ENCODE measurements at regions of chr10 and their contacts with region 1.

Region 1: GRCh38 chr10:101840741-101841453 is 2.7 kb downstream of the KCNIP2 start:
- DNase-seq: peak; percentile 80
- H3K4me3 Mint-ChIP-seq: peak overlapping the region; percentile 78
- H3K27ac Mint-ChIP-seq: no peak overlapping the region
- H3K4me1 Mint-ChIP-seq: peaks cover 47% of the 10 kb centered on the region
- H3K27me3 Mint-ChIP-seq: peaks cover 57% of the 10 kb centered on the region

Region 2: DNA sequence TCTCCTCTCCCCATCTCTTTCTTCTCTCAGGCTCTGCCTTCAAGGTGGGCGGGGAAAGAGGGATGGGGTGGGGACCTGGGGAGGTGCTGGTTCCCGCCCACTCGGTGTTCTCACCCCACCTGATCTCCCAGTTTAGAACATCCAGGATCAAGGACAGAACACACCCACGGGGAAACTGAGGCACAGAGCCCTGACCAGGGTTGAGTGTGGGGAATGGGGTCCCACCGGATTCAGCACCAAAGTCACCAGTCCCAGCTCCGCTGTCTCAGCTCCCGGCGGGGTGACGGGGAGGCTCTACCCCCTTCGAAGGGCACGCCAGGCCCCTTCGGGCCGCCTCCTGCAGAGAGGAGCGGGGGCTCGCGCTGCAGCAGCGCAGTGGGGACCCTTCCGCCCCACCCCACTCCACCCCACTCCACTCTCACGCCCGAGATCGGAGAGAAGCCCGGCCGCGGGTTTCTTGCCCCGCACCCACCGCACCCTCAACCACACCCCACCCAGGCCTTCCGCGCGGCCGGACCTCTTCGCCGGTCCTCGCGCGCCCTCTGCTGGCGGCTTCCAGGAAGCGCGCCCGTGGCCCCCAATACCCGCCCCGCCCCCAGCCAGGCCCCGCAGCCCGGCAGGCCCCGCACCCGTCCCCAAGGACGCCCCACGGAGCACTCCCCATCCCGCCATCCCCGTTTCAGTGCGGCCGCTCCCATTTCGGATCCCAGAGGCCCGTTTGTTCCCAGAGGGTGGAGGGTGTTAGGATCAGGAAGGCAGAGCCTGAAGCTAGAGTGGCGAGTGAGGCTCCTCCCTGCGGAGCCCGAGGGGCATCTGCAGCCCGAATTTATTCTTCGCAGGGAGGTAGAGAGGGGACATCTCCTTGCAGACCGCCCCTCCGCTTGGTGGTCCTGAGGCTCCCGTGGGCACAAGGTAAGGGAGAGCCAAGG is 270.8 kb before region 1 on chr10:
- CTCF ChIA-PET with region 1: no interaction called
- DNase-seq: peak; percentile 86
- H3K4me3 Mint-ChIP-seq: peak overlapping the region; percentile 74
- H3K27ac Mint-ChIP-seq: no peak overlapping the region
- H3K4me1 Mint-ChIP-seq: peaks cover 20% of the 10 kb centered on the region
- H3K27me3 Mint-ChIP-seq: peaks cover 73% of the 10 kb centered on the region

Region 3: DNA sequence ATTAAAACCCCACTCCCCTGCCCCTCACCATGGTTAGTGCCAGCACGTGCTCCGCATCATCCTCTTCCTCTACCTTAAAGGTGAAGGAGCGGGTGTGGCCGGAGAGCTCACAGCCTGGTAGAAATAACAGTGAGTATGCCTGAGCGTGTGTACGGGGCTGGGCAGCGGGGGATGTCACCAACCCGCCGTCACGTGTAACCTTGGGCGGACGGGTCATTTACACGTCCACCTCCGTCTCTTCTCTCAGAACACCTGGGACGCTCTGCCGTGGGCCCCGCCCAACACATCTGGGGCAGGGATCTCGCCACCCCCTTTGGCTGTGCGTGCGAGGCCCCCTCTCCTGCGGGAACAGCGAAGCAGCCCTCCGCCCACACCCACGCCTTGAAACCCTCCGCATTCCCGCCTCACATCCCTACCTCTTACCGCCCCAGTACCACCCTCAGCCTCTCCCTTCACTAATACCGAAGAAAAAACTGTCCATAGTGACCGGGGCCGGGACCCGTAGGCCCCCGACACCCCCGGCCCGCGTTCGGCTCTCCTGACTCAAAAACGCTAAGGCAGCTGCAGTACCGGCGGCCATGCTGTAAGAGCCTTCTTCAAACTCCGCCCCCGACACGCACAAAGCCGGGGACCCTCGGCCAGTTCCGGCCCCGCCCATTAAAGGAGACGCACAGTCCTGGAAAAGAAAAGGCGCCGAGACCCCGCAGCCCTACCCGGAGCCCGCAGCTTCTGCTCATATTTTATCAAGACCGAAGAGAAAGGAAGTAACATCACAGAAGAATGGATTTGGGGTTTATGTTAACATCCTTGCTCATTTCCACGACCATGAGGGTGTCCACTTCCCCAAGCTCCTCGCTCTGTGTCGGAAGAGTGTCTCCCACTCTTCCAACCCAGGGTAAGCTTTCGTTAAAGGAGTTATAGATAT is 57.8 kb before region 1 on chr10 and contains the start of gene NPM3:
- CTCF ChIA-PET with region 1: interaction called, 10 read pairs
- DNase-seq: peak; percentile 91
- H3K4me3 Mint-ChIP-seq: peak within 1 kb of the TSS; percentile 97
- H3K27ac Mint-ChIP-seq: peak within 1 kb of the TSS; percentile 94
- H3K4me1 Mint-ChIP-seq: peaks cover 65% of the 10 kb centered on the region
- H3K27me3 Mint-ChIP-seq: peaks cover 21% of the 10 kb centered on the region

Region 4: DNA sequence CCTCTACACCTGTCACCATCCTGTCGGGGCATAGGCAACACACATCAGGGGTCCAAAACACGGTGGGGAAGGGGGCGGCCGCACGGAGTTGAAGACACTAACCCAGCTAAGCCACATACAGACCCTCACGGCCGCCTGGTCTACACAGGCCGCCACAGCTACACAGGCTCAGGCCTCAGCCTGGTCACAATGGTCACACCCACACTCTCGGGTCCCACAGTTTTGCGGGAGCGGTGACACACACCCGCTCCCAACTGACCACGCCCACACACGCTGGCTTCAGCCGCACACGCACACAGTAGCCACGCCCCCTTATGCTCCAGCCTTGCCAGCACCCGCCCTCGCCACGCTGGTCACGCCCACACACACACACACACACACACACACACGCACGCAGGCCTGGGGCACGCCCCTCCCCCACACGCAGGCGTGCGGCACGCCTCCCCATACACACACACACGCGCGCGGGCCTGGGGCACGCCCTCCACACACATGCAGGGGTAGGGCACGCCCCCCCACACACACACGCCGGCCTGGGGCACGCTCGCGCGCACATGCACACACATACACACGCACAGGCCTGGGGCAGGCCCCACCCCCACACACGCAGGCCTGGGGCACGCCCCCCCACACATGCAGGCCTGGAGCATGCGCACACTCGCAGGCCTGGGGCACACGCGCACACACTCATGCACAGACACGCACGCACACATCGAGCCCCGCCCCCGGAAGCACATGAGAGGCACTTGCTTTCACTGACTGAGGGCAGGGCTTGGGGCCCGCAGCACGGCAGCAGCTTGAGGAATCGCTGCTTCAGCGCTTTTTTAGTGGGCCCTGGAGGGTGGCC is 10.4 kb before region 1 on chr10:
- CTCF ChIA-PET with region 1: interaction called, 14 read pairs
- DNase-seq: peak; percentile 95
- H3K4me3 Mint-ChIP-seq: peak overlapping the region; percentile 74
- H3K27ac Mint-ChIP-seq: peak overlapping the region; percentile 96
- H3K4me1 Mint-ChIP-seq: peaks cover 62% of the 10 kb centered on the region
- H3K27me3 Mint-ChIP-seq: peaks cover 4% of the 10 kb centered on the region

Region 5: DNA sequence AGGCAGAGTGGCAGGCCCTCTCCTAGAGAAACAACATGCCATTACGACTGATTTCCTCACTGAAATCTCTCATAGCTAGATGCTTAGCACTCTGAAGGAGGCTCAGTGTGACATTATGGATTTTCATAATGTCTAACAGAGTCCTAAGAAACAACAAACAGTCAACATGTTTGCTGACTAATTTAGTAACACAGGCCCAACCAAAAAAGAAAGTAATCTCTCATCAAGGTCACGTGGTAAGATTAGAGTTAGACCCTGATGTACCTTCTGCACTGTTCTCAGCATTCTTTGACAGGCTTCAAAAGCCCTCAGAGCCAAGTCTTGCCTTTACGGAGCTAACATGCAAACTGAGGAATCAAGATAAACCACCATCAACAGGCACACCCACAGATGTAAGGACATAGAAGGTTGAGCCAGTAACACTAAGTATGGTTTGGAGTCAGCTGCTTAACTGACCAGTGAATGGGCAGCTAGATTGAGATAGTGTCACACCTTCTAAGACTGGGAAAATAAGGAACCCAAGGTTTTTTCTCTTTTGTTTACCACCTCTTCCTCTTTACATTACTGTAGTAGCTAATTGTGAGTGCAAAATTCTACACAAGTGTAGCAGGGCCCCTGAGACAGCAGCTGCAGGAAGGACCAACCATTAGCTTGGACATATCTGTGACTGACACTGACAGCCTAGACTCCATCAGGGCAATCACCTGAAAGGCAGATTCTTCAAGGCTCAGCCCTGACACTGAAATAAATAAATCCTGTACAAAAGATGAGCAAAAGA is 18.0 kb after region 1 on chr10:
- CTCF ChIA-PET with region 1: interaction called, 25 read pairs
- DNase-seq: no peak
- H3K4me3 Mint-ChIP-seq: no peak overlapping the region
- H3K27ac Mint-ChIP-seq: no peak overlapping the region
- H3K4me1 Mint-ChIP-seq: peaks cover 10% of the 10 kb centered on the region
- H3K27me3 Mint-ChIP-seq: no peaks in the 10 kb centered on the region

Region 6: GRCh38 chr10:101889256-101890210 is 48.6 kb after region 1 on chr10:
- CTCF ChIA-PET with region 1: interaction called, 20 read pairs
- DNase-seq: peak; percentile 85
- H3K4me3 Mint-ChIP-seq: no peak overlapping the region
- H3K27ac Mint-ChIP-seq: no peak overlapping the region
- H3K4me1 Mint-ChIP-seq: no peaks in the 10 kb centered on the region
- H3K27me3 Mint-ChIP-seq: no peaks in the 10 kb centered on the region

Region 7: DNA sequence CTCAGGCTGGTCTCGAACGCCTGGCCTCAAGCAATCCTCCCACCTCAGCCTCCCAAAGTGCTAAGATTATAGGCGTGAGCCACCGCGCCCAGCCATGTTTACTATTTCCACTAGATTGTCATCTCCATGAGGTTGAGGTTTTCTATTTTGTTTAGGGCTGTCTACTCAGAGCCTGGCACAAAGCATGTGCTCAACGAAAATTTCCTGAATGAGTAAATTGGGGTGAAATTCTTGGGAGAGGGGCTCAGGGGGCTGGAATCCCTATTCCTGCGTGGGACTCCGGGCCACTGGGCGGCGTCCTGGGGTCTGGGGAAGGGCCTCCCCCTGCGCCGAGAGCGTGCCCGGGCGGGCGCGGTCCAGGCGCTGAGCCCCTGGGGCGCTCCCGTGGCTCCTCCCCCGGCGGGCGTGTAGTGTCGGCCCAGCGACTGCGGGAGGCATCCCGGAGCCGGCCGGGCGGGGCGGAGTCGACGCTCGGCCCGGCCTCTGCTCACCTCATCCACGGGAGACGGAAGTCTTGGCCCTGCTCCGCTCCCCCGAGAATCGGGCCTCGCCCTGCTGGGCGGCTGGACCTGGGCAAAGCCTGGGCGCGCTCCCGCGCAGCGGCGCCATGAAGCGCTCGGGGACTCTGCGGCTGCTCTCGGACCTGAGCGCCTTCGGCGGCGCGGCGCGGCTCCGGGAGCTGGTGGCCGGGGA is 224.1 kb after region 1 on chr10 and contains the start of gene HPS6:
- CTCF ChIA-PET with region 1: interaction called, 91 read pairs
- DNase-seq: peak; percentile 94
- H3K4me3 Mint-ChIP-seq: peak within 1 kb of the TSS; percentile 85
- H3K27ac Mint-ChIP-seq: peak within 1 kb of the TSS; percentile 95
- H3K4me1 Mint-ChIP-seq: peaks cover 32% of the 10 kb centered on the region
- H3K27me3 Mint-ChIP-seq: no peaks in the 10 kb centered on the region

Measured in activated naive CD4-positive, alpha-beta T cell treated with anti-CD3 and anti-CD28 coated beads, Interleukin-2, amount 10 ng/mL, durations not matched to agents 7 days and 5 days (primary cell).